Activated T-helper 1 cell treated with anti-CD3 and anti-CD28 coated beads, Interleukin-12 subunit alpha, Interleukin-12 subunit beta, Interleukin-2, Interleukin-4 antibody, amounts not matched to agents 30 ng/mL and 10 ng/mL and 1 ng/mL, durations not matched to agents 14 hours and 24 hours and 36 hours (primary cell): ENCODE measurements at regions of chr9 and their contacts with region 1.

Region 1: DNA sequence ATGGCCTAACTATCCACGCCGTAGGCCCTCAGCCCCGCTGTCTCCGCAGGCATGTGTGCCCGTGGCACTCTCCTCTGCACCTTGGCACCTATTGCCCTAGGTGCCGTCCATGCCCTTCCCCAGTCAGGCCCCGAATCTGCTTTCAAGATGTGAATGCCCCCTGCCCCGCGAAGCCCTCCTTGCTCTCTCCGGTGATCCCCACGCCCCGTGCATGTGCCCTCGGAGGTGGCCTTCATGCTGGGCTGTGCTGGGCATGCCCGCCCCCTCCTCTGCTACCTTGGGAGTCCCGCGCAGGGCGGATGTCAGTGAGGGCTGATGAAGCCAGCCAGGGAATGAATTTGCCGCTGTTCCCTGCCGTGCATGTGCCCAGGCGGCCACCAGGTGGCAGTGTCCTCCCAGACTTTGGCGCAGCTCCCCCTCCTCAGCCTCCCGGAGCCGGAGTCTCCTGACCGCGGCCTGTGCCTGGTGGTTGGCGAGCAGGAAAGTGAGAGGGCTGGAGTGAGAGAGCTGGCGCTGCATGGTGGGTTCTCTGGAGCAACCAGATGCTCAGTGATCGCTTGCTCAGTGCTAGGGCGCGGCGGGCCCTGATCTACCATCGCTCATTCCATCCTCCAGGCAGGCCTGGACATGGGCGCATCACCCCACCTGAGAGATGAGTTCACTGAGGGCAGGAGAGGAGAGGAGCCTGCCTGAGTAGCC is 112.9 kb upstream of the LMX1B start:
- DNase-seq: peak; percentile 41
- H3K4me3 Mint-ChIP-seq: no peak overlapping the region
- H3K27ac Mint-ChIP-seq: no peak overlapping the region
- H3K4me1 Mint-ChIP-seq: no peaks in the 10 kb centered on the region
- H3K27me3 Mint-ChIP-seq: peaks cover 18% of the 10 kb centered on the region

Region 2: DNA sequence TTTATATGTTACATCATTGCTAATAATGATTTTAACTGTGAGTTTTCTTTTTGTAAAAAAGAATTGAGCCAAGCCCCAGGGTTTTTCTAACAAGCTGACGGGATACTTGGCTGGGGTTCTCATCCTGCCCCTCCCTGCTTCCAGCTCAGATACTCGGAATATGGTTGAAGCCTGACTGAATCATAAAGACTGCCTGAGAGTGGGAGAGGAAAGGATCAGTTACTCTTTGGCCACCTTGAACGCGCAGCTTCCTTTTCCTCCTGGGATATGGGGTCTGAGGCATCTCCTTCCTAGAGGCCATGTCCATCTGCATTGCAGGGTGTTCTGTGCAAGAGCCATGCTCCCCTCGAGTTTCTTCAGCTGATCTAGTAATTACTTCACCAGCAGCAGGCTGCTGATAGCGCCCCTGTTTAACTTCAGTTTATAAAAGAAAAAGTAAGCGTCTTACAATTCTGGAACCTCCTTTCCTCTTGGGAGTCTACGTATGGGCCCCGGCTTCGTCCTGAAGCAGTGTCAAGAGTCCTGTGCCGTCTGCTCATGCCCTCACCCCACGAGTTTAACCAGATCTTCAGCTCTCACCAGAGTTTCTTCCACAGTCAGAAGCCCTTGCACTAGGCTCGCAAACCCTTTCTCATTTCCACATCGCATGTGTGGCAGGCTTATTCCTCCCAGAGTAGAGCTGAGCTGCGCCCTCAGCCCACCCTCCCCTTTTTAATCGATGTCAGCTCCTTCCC is 44.2 kb before region 1 on chr9:
- intact Hi-C with region 1: no loop called
- DNase-seq: no peak
- H3K4me3 Mint-ChIP-seq: no peak overlapping the region
- H3K27ac Mint-ChIP-seq: no peak overlapping the region
- H3K4me1 Mint-ChIP-seq: no peaks in the 10 kb centered on the region
- H3K27me3 Mint-ChIP-seq: peaks cover 11% of the 10 kb centered on the region

Region 3: GRCh38 chr9:126471084-126471624 is 29.7 kb before region 1 on chr9:
- intact Hi-C with region 1: no loop called
- DNase-seq: peak; percentile 81
- H3K4me3 Mint-ChIP-seq: peak overlapping the region; percentile 58
- H3K27ac Mint-ChIP-seq: peak overlapping the region; percentile 89
- H3K4me1 Mint-ChIP-seq: peaks cover 47% of the 10 kb centered on the region
- H3K27me3 Mint-ChIP-seq: peaks cover 50% of the 10 kb centered on the region

Region 4: GRCh38 chr9:126558051-126558665 is 57.3 kb after region 1 on chr9:
- intact Hi-C with region 1: loop called (anchors 1 kb)
- DNase-seq: peak; percentile 49
- H3K4me3 Mint-ChIP-seq: no peak overlapping the region
- H3K27ac Mint-ChIP-seq: no peak overlapping the region
- H3K4me1 Mint-ChIP-seq: no peaks in the 10 kb centered on the region
- H3K27me3 Mint-ChIP-seq: peaks cover 8% of the 10 kb centered on the region

Region 5: GRCh38 chr9:126599047-126599650 is 98.3 kb after region 1 on chr9:
- intact Hi-C with region 1: no loop called
- DNase-seq: no peak
- H3K4me3 Mint-ChIP-seq: no peak overlapping the region
- H3K27ac Mint-ChIP-seq: no peak overlapping the region
- H3K4me1 Mint-ChIP-seq: no peaks in the 10 kb centered on the region
- H3K27me3 Mint-ChIP-seq: peaks cover 43% of the 10 kb centered on the region